Activated CD8-positive, alpha-beta memory T cell treated with anti-CD3 and anti-CD28 coated beads, Interleukin-2, amount 10 ng/mL, durations not matched to agents 7 days and 5 days (primary cell): ENCODE measurements at regions of chr6 and their contacts with region 1.

Region 1: GRCh38 chr6:28355743-28356665 is 6.3 kb downstream of the ZKSCAN3 start:
- DNase-seq: peak; percentile 77
- ATAC-seq: peak; percentile 86
- H3K4me3 Mint-ChIP-seq: peak overlapping the region; percentile 85
- H3K27ac Mint-ChIP-seq: peak overlapping the region; percentile 85
- H3K4me1 Mint-ChIP-seq: peaks cover 23% of the 10 kb centered on the region
- H3K27me3 Mint-ChIP-seq: no peaks in the 10 kb centered on the region

Region 2: GRCh38 chr6:28060405-28060804 is 295.6 kb before region 1 on chr6:
- CTCF ChIA-PET with region 1: no interaction called
- DNase-seq: no peak
- ATAC-seq: no peak
- H3K4me3 Mint-ChIP-seq: no peak overlapping the region
- H3K27ac Mint-ChIP-seq: no peak overlapping the region
- H3K4me1 Mint-ChIP-seq: no peaks in the 10 kb centered on the region
- H3K27me3 Mint-ChIP-seq: peaks cover 16% of the 10 kb centered on the region

Region 3: DNA sequence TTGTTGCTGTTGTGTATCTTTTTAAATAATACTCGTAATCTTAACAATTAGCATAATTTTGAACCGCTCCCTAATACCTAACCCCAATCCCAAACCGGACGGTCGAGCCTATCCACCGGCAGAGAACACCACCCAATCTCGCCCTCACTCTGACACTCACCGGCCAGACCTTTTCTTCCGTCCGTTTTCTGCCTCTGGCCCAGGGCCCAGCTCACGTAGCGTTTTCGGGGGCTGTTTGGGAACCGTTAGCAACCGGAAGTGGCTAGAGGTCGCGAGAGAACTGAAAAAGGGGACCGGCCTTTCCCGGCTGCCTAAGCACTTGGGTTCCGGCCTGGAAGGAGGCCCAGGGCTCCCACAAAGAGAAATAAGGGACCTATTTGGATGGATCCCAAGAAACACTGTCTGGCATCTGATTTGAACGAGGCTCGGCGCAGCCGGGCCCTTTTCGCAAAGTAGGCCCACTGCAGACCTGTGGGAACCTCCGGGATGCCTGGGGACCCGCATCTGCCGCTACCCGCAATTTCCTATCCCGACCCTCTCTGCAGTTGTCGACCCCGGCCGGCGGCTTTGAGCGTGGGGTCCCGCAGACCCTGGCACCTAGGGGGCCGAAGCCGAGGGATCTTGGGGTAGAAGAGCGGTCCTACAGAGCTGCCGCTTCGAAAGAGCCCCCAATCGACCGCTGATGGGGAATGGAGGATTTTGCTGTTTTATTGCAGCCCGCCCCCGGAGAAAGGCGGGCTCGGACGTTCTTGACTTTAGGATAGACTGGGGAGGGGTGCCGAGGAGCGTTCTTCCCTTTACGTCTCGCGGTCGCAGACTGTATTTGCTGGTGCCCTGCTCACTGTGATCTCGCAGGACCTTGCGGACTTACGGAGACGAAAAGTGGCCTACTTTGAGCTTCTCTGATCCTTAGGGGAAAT is 219.2 kb before region 1 on chr6:
- CTCF ChIA-PET with region 1: interaction called, 18 read pairs
- DNase-seq: peak; percentile 87
- ATAC-seq: peak; percentile 67
- H3K4me3 Mint-ChIP-seq: peak overlapping the region; percentile 91
- H3K27ac Mint-ChIP-seq: peak overlapping the region; percentile 94
- H3K4me1 Mint-ChIP-seq: peaks cover 67% of the 10 kb centered on the region
- H3K27me3 Mint-ChIP-seq: no peaks in the 10 kb centered on the region

Region 4: DNA sequence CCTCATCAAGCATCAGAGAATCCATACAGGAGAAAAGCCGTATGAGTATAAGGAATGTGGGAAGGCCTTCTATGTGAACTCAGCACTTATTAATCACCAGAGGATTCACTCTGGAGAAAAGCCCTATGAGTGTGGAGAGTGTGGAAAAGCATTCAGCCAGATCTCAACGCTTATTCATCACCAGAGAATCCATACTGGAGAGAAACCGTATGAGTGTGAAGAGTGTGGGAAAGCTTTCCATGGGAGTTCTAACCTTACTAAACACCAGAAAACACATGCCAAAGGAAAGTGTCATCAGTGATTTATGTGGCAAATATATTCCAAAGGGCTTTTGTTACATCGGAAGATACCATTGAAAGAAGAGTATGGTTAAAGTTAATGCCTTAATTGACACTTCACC is 188.9 kb before region 1 on chr6:
- CTCF ChIA-PET with region 1: no interaction called
- DNase-seq: no peak
- ATAC-seq: no peak
- H3K4me3 Mint-ChIP-seq: no peak overlapping the region
- H3K27ac Mint-ChIP-seq: no peak overlapping the region
- H3K4me1 Mint-ChIP-seq: peaks cover 4% of the 10 kb centered on the region
- H3K27me3 Mint-ChIP-seq: peaks cover 3% of the 10 kb centered on the region

Region 5: GRCh38 chr6:28266962-28267694 is 88.9 kb before region 1 on chr6 and contains the start of gene ZSCAN26:
- CTCF ChIA-PET with region 1: interaction called, 12 read pairs
- DNase-seq: peak; percentile 93
- ATAC-seq: peak; percentile 97
- H3K4me3 Mint-ChIP-seq: no peak within 1 kb of the TSS
- H3K27ac Mint-ChIP-seq: no peak within 1 kb of the TSS
- H3K4me1 Mint-ChIP-seq: peaks cover 22% of the 10 kb centered on the region
- H3K27me3 Mint-ChIP-seq: peaks cover 3% of the 10 kb centered on the region
- total RNA-seq, gene ZSCAN26: 7.8 to 11.7 TPM

Region 6: GRCh38 chr6:28335564-28336283 is 20.3 kb before region 1 on chr6 and contains the start of gene ZSCAN31:
- CTCF ChIA-PET with region 1: interaction called, 18 read pairs
- DNase-seq: peak; percentile 88
- ATAC-seq: peak; percentile 93
- H3K4me3 Mint-ChIP-seq: no peak within 1 kb of the TSS
- H3K27ac Mint-ChIP-seq: peak within 1 kb of the TSS; percentile 26
- H3K4me1 Mint-ChIP-seq: peaks cover 3% of the 10 kb centered on the region
- H3K27me3 Mint-ChIP-seq: no peaks in the 10 kb centered on the region
- total RNA-seq, gene ZSCAN31: 1.0 to 1.7 TPM

Region 7: DNA sequence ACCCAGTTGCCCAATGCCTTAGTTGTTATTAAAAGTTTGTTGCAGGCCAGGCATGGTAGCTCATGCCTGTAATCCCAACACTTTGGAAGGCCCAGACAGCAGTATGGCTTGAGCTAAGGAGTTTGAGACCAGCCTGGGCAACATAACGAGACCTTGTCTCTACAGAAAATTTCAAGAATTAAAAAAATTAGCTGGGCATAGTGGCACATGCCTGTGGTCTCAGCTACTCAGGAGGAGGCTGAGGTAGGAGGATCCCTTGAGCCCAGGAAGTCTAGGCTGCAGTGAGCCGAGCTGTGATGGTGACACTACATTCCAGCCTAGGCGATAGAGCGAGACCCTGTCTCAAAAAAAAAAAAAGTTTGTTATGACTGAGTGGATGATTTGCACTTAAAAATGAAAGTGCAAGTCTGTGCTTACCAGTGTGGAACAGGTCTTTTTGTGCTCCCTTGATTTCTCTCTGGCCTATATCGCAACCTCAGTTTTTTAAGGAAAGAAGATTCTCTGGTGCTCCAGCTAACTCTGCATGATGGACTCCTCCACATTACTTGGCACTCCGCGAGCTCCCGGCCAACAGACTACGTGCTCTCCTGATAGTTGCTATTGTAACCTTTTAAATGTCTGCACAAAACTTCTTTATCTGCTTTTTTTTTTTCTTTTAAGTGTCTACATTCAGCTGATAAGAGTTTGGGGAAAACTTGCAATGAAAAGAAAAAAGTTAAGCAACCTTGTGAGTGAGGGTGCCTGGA is 15.9 kb after region 1 on chr6:
- CTCF ChIA-PET with region 1: interaction called, 11 read pairs
- DNase-seq: no peak
- ATAC-seq: no peak
- H3K4me3 Mint-ChIP-seq: no peak overlapping the region
- H3K27ac Mint-ChIP-seq: no peak overlapping the region
- H3K4me1 Mint-ChIP-seq: no peaks in the 10 kb centered on the region
- H3K27me3 Mint-ChIP-seq: no peaks in the 10 kb centered on the region